Left lung (tissue), 14 donors: ENCODE measurements at regions of chr2 and their contacts with region 1.

Region 1: GRCh38 chr2:64914735-64915509 is 74.3 kb upstream of the SLC1A4 start:
- DNase-seq: peak in 1 of 4 donors; percentile 13
- ATAC-seq: no peak
- H3K4me3 ChIP-seq: no peak overlapping the region
- H3K27ac ChIP-seq: no peak overlapping the region
- H3K4me1 ChIP-seq: peaks cover 0 to 18% of the 10 kb centered on the region in 2 donors
- H3K27me3 ChIP-seq: no peaks in the 10 kb centered on the region
- CTCF ChIP-seq: no peak

Region 2: GRCh38 chr2:65040400-65041261 is 125.7 kb after region 1 on chr2:
- intact Hi-C with region 1: loop called in 1 of 2 experiments (anchors 5 kb)
- DNase-seq: peak; percentile 65 to 87 (median 85)
- ATAC-seq: peak; percentile 100
- H3K4me3 ChIP-seq: no peak overlapping the region
- H3K27ac ChIP-seq: no peak overlapping the region
- H3K4me1 ChIP-seq: peaks cover 0 to 7% of the 10 kb centered on the region in 2 donors
- H3K27me3 ChIP-seq: no peaks in the 10 kb centered on the region
- CTCF ChIP-seq: peak; percentile 98

Region 3: GRCh38 chr2:65186872-65187851 is 272.2 kb after region 1 on chr2:
- intact Hi-C with region 1: no loop called
- DNase-seq: peak; percentile 68 to 83 (median 74)
- ATAC-seq: peak; percentile 99
- H3K4me3 ChIP-seq: no peak overlapping the region
- H3K27ac ChIP-seq: no peak overlapping the region
- H3K4me1 ChIP-seq: peaks cover 5 to 15% of the 10 kb centered on the region in 2 donors
- H3K27me3 ChIP-seq: no peaks in the 10 kb centered on the region
- CTCF ChIP-seq: peak; percentile 77 to 82